Activated CD4-positive, alpha-beta T cell treated with anti-CD3 and anti-CD28 coated beads for 36 hours (primary cell): ENCODE measurements at regions of chr12 and their contacts with region 1.

Region 1: GRCh38 chr12:75489613-75490210 is 9.2 kb downstream of the GLIPR1 start:
- DNase-seq: peak; percentile 57
- ATAC-seq: peak; percentile 97
- H3K4me3 Mint-ChIP-seq: peak overlapping the region; percentile 10
- H3K27ac Mint-ChIP-seq: peak overlapping the region; percentile 87
- H3K4me1 Mint-ChIP-seq: peaks cover 44% of the 10 kb centered on the region
- H3K27me3 Mint-ChIP-seq: no peaks in the 10 kb centered on the region

Region 2: GRCh38 chr12:75511116-75512048 is 21.7 kb after region 1 on chr12 and contains the start of gene KRR1:
- CTCF ChIA-PET with region 1: interaction called, 35 read pairs
- POLR2A ChIA-PET with region 1: interaction called, 6 read pairs
- intact Hi-C with region 1: loop called (anchors 1 to 2 kb)
- DNase-seq: peak; percentile 94
- ATAC-seq: peak; percentile 96
- H3K4me3 Mint-ChIP-seq: peak within 1 kb of the TSS; percentile 100
- H3K27ac Mint-ChIP-seq: peak within 1 kb of the TSS; percentile 99
- H3K4me1 Mint-ChIP-seq: peaks cover 33% of the 10 kb centered on the region
- H3K27me3 Mint-ChIP-seq: no peaks in the 10 kb centered on the region
- total RNA-seq, gene KRR1: 122 to 147 TPM

Region 3: GRCh38 chr12:76199808-76200207 is 710.1 kb after region 1 on chr12:
- CTCF ChIA-PET with region 1: no interaction called
- POLR2A ChIA-PET with region 1: no interaction called
- intact Hi-C with region 1: no loop called
- DNase-seq: no peak
- ATAC-seq: no peak
- H3K4me3 Mint-ChIP-seq: no peak overlapping the region
- H3K27ac Mint-ChIP-seq: no peak overlapping the region
- H3K4me1 Mint-ChIP-seq: peaks cover 3% of the 10 kb centered on the region
- H3K27me3 Mint-ChIP-seq: peaks cover 21% of the 10 kb centered on the region